ENCODE measurements at regions of chr1 and their contacts with region 1.

Region 1: GRCh38 chr1:155044812-155045690 is 6.1 kb upstream of the ADAM15 start:
- DNase-seq: peak; percentile 91

Region 2: DNA sequence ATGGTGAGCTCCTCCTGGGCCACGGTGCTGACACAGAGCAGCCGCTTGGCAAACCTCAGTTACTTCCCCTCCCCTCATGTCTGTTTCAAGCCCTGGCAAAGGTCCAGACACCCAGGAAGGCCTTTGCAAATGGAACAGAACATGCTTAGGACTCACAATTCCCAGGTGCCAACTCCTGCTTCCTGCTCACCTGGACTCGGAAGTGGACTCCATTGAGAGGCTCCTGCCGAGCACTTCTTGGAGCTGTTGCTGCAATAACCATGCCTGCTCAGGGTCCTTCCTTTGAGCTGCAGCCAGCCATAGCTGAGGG is 22.2 kb before region 1 on chr1:
- intact Hi-C with region 1: loop called in 1 of 2 experiments (anchors 2 kb)
- DNase-seq: no peak

Region 3: DNA sequence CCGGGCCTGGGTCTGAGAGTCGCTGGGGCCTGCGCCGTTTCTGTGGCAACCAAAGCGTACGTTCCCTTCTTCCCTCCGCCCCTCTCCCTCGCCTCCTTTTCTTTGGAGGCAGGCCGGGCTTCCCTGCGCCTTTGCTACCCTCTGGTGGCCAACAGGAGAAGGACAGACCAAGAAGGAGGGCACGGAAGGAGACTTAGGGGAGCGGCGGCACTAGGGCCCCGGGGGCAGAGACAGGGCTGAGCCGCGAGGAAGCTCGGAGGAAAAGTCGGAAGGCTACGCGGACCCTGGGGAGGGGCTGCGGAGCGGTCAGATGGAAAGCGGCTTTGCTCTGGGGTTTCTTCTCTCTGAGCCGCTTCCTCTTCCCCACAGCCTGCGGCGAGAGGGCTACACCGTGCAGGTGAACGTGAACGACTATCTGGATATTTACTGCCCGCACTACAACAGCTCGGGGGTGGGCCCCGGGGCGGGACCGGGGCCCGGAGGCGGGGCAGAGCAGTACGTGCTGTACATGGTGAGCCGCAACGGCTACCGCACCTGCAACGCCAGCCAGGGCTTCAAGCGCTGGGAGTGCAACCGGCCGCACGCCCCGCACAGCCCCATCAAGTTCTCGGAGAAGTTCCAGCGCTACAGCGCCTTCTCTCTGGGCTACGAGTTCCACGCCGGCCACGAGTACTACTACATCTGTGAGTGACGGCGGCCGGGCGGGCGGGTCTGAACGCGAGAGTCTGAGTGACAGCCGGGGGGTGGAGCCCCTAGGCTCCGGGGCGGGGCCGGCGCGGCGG is 39.9 kb after region 1 on chr1:
- intact Hi-C with region 1: loop called in 1 of 2 experiments (anchors 2 kb)
- DNase-seq: peak; percentile 97

Measured in posterior vena cava (tissue), 2 donors.